Sciatic nerve (tissue), 2 donors: ENCODE measurements at regions of chr1 and their contacts with region 1.

Region 1: GRCh38 chr1:231528172-231529029 is at the start of gene TSNAX:
- DNase-seq: peak; percentile 94
- ATAC-seq: peak; percentile 100
- total RNA-seq, gene TSNAX: 41.6 TPM

Region 2: DNA sequence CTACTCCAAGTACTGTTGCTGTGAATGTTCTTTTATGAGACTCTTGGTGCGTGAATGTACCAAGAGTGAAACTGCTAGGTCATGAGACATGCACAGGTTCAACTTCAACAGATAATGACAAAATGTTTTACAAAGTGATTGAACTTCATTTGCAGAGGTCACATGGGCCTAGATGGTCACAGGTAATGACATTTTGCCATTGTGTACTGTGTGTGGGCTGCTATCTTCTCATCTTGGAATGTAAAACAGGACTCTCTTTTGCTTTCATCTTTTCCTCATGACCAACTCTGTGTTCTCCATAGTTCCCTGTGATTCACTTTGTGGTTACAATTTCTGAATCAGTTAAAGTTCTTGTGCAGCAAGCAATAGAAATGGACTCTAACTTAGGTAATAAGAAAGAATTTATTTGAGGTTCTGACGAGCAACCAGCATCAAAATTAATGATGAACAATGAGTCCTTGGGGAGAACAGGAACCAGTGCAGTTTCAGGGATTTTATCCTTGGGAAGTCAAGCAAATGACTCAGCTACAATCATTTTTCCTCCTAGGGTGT is 16.2 kb before region 1 on chr1:
- intact Hi-C with region 1: loop called (anchors 1 kb)
- DNase-seq: no peak
- ATAC-seq: no peak

Region 3: DNA sequence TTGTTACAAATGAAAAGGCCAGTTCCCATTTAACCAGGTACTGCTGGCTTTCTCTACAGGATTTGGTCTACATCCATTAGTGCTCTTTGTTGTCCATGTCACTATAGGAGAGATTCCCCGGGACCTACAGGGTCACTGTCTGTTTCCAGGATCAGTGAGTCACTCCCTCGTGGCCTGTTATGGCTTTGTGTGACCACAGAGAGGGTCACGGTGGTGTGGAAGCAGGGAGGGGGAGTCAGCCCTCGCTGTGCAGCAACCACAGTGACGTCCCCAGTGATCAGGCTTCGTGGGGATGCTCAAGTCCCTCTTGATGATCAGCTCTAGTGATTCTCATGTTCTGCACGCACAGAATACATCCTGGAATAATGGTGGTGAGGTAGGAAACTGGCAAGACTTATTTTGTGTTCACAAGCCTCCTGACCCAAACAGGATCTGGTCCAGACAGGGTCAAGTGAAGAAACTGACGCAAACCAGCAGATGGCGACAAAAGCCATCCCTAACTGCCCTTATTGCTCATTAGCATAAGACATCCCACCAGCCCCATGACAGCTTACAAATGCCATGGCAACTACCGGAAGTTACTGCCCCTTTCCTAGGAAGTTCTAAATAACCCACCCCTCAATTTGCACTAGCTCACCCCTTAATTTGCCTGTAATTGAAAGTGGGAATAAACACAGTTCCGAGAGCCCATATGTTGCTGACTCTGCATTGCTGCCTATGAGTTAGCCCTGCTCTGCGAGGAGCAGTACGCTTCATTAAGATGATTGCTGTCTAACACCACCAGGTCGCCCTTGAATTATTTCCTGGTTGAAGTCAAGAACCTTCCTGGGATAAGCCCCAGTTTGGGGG is 196.7 kb after region 1 on chr1:
- intact Hi-C with region 1: no loop called
- DNase-seq: no peak
- ATAC-seq: peak; percentile 46